Vagina (tissue), 2 donors: ENCODE measurements at regions of chr14 and their contacts with region 1.

Region 1: GRCh38 chr14:102694530-102695166 is 82.6 kb upstream of the TRAF3 start:
- DNase-seq: no peak
- H3K4me3 ChIP-seq: no peak overlapping the region
- H3K27ac ChIP-seq: no peak overlapping the region
- H3K4me1 ChIP-seq: peaks cover 22% of the 10 kb centered on the region
- H3K27me3 ChIP-seq: no peaks in the 10 kb centered on the region
- CTCF ChIP-seq: peak; percentile 65 to 80 (median 72)
- POLR2A ChIP-seq: no peak

Region 2: DNA sequence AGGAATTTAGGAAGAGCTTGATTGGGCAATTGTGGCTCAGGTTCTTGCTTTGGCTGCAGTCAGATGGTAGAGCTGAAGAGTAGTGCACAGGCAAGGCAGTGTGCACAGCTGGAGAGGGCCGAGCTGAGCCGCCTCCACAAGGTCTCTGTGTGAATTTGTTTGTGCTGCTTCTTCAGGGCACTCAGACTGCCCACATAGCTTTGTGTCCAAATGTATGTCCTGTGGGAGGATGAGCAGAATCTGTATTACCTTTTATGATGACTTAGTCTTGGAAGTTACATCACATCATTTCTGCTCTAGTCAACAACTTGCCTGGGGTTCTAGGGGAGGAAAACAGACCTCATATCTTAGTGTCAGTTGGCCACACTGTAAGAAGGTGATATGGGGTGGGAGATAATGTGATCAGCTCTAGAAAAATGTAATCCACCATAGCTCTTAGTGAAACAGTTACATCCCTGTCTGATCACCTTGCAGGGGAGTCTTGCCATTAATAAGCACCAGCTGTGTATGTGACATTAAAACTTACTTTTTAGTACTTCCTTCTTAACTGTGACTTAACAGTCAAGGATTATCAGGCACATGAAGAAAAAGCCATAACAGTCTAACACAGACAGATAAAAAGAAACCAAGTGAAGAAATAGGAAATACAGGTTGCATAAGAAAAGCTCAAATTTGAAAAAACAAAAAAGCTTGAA is 48.8 kb before region 1 on chr14:
- intact Hi-C with region 1: no loop called
- DNase-seq: no peak
- H3K4me3 ChIP-seq: no peak overlapping the region
- H3K27ac ChIP-seq: no peak overlapping the region
- H3K4me1 ChIP-seq: peaks cover 22% of the 10 kb centered on the region
- H3K27me3 ChIP-seq: no peaks in the 10 kb centered on the region
- CTCF ChIP-seq: no peak
- POLR2A ChIP-seq: no peak

Region 3: DNA sequence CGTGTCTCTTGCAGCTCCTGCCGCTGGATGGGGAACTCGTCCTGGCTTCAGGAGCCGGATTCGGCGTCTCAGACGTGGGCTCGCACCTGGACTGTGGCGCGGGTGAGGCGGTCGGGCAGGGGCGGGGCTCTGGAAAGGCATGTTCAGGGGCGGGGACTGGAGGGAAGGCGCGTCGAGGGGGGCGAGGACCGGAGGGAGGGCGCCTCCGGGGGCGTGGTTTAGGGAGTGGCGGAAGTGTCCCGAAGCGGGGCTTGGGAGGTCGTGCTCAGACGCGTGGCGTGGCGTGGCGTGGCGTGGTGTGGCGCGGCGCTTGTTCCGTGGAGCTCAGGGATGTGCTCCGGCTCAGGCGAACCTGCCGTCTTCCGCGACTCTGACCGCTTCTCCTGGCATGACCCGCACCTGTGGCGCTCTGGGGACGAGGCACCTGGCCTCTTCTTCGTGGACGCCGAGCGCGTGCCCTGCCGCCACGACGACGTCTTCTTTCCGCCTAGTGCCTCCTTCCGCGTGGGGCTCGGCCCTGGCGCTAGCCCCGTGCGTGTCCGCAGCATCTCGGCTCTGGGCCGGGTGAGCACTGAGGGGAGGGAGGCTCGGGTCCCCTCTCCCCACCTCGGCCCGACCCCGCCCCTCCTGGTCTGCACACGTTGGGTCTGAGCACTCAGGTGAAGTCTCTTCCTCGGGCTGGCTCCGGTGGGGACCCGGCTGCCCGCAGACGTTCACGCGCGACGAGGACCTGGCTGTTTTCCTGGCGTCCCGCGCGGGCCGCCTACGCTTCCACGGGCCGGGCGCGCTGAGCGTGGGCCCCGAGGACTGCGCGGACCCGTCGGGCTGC is 234.0 kb after region 1 on chr14:
- intact Hi-C with region 1: loop called (anchors 10 kb)
- DNase-seq: no peak
- H3K4me3 ChIP-seq: peak overlapping the region; percentile 45 to 52
- H3K27ac ChIP-seq: peak overlapping the region; percentile 66
- H3K4me1 ChIP-seq: peaks cover 39% of the 10 kb centered on the region
- H3K27me3 ChIP-seq: no peaks in the 10 kb centered on the region
- CTCF ChIP-seq: no peak
- POLR2A ChIP-seq: no peak